ENCODE measurements at regions of chr22 and their contacts with region 1.

Region 1: GRCh38 chr22:41739576-41739975 is 40.3 kb downstream of the MEI1 start:
- DNase-seq: no peak
- H3K4me3 ChIP-seq: no peak overlapping the region
- H3K27ac ChIP-seq: no peak overlapping the region
- H3K4me1 ChIP-seq: no peaks in the 10 kb centered on the region
- H3K27me3 ChIP-seq: no peaks in the 10 kb centered on the region
- CTCF ChIP-seq: no peak
- POLR2A ChIP-seq: no peak

Region 2: GRCh38 chr22:41688365-41689211 is 51.0 kb before region 1 on chr22 and contains the start of gene SNU13:
- intact Hi-C with region 1: no loop called
- DNase-seq: peak; percentile 83 to 89
- H3K4me3 ChIP-seq: peak within 1 kb of the TSS; percentile 67 to 95 (median 81)
- H3K27ac ChIP-seq: peak within 1 kb of the TSS; percentile 97 to 98
- H3K4me1 ChIP-seq: peaks cover 0 to 6% of the 10 kb centered on the region in 2 donors
- H3K27me3 ChIP-seq: no peaks in the 10 kb centered on the region
- CTCF ChIP-seq: peak in 2 of 3 donors; percentile 11 to 26
- POLR2A ChIP-seq: peak; percentile 40
- total RNA-seq, gene SNU13: 97.9 to 145 (median 127) TPM

Region 3: DNA sequence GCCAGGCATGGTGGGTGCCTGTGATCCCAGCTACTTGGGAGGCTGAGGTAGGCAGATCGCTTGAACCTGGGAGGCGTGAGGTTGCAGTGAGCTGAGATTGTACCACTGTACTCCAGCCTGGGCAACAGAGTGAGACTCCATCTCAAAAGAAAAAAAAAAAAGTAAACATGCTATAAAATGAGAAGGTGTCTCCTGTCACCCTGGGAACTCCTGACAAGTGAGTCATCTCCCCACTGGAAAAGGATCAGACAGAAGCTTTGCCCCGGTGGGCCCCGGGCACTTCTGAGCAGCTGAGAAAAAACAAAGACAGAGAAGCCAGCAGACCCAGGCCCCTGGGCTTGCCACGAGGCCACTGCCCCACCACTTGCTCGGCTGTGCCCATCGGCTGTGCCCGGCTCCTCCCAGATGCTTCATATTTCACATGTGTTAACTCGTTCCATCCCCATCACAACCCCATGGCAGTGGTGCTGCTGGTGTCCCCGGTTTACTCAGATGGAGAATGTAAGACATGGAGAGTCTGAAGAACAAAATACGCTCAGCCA is 1327.3 kb after region 1 on chr22:
- intact Hi-C with region 1: loop called (anchors 5 kb)
- DNase-seq: no peak
- H3K4me3 ChIP-seq: no peak overlapping the region
- H3K27ac ChIP-seq: peak overlapping the region in 1 of 2 donors; percentile 38
- H3K4me1 ChIP-seq: no peaks in the 10 kb centered on the region
- H3K27me3 ChIP-seq: no peaks in the 10 kb centered on the region
- CTCF ChIP-seq: no peak
- POLR2A ChIP-seq: no peak

Measured in breast epithelium (tissue), 4 donors.